Thyroid gland (tissue), 4 donors: ENCODE measurements at regions of chr2 and their contacts with region 1.

Region 1: GRCh38 chr2:189661148-189661956 is at the start of gene ASNSD1:
- DNase-seq: peak; percentile 99
- H3K4me3 ChIP-seq: peak within 1 kb of the TSS; percentile 51 to 76 (median 62)
- H3K27ac ChIP-seq: peak within 1 kb of the TSS; percentile 59 to 92 (median 82)
- H3K4me1 ChIP-seq: peaks cover 7 to 17% of the 10 kb centered on the region in 2 donors
- H3K27me3 ChIP-seq: no peaks in the 10 kb centered on the region
- CTCF ChIP-seq: peak; percentile 87 to 100 (median 96)
- POLR2A ChIP-seq: peak; percentile 33 to 96
- total RNA-seq, gene ASNSD1: 42.0 to 80.9 (median 49.3) TPM

Region 2: GRCh38 chr2:189641590-189641989 is 19.8 kb before region 1 on chr2:
- intact Hi-C with region 1: no loop called
- DNase-seq: no peak
- H3K4me3 ChIP-seq: no peak overlapping the region
- H3K27ac ChIP-seq: no peak overlapping the region
- H3K4me1 ChIP-seq: no peaks in the 10 kb centered on the region
- H3K27me3 ChIP-seq: no peaks in the 10 kb centered on the region
- CTCF ChIP-seq: no peak
- POLR2A ChIP-seq: no peak

Region 3: DNA sequence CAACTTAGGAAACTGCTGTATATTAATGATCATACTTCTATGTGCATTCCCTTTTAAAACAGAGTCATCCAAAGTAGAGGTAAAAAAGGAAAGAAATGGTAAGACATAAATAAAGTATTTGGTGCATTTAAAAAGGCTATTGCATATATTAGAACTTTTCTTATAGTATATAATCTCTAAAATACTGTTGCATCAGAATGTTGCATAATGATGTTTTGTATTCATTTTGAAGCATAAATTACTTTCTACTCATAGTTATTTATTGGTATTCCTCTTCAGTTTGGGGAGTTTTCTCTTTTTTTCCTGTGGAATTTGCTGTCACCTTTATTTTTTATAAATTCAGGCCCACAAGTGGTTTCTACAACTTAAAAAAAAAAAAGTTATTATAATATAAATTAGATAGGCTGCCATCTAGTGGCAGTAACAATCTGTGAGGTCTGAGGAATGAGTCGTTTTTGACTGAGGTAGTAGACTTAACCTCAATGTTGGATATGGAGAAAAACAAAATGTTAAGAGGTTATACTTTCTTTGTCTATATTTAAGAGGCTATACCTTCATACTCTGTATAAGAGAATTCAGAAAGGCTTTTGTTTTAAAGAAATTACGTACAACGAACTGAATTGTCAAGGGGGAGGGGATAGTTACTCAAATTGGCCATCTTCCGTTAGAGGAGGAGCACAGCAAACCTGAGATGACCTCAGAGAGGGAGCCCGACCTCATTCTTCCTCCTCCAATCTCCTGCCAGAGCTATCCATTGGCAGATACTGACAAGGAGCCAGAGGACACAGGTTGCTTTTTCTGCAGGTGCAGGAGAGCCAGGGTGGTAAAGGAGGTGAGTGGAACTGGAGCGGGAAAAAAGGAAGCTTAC is 36.9 kb after region 1 on chr2:
- intact Hi-C with region 1: loop called (anchors 5 kb)
- DNase-seq: peak; percentile 53 to 65
- H3K4me3 ChIP-seq: no peak overlapping the region
- H3K27ac ChIP-seq: peak overlapping the region; percentile 31 to 57 (median 35)
- H3K4me1 ChIP-seq: peaks cover 0 to 5% of the 10 kb centered on the region in 2 donors
- H3K27me3 ChIP-seq: no peaks in the 10 kb centered on the region
- CTCF ChIP-seq: peak; percentile 7 to 71 (median 46)
- POLR2A ChIP-seq: peak in 1 of 2 donors; percentile 30

Region 4: GRCh38 chr2:189709501-189710221 is 48.3 kb after region 1 on chr2:
- intact Hi-C with region 1: no loop called
- DNase-seq: no peak
- H3K4me3 ChIP-seq: no peak overlapping the region
- H3K27ac ChIP-seq: no peak overlapping the region
- H3K4me1 ChIP-seq: no peaks in the 10 kb centered on the region
- H3K27me3 ChIP-seq: no peaks in the 10 kb centered on the region
- CTCF ChIP-seq: no peak
- POLR2A ChIP-seq: no peak

Region 5: GRCh38 chr2:189783927-189784867 is 122.8 kb after region 1 on chr2 and contains the starts of genes ORMDL1 and PMS1:
- intact Hi-C with region 1: loop called (anchors 10 kb)
- DNase-seq: peak; percentile 94 to 96
- H3K4me3 ChIP-seq: peak within 1 kb of the TSS; percentile 28 to 88 (median 57)
- H3K27ac ChIP-seq: peak within 1 kb of the TSS; percentile 89 to 97 (median 92)
- H3K4me1 ChIP-seq: peaks cover 15 to 19% of the 10 kb centered on the region in 2 donors
- H3K27me3 ChIP-seq: no peaks in the 10 kb centered on the region
- CTCF ChIP-seq: no peak
- POLR2A ChIP-seq: peak; percentile 52 to 92
- total RNA-seq, gene ORMDL1: 73.1 to 124 (median 90.0) TPM
- total RNA-seq, gene PMS1: 22.7 to 34.9 (median 28.1) TPM